Tibial artery (tissue), 4 donors: ENCODE measurements at regions of chr22 and their contacts with region 1.

Region 1: GRCh38 chr22:31661851-31662656 is at the start of gene PISD:
- DNase-seq: peak; percentile 96
- H3K4me3 ChIP-seq: peak within 1 kb of the TSS; percentile 95 to 96
- H3K27ac ChIP-seq: peak within 1 kb of the TSS; percentile 74 to 77
- H3K4me1 ChIP-seq: peaks cover 0 to 17% (median 16%) of the 10 kb centered on the region in 4 donors
- H3K27me3 ChIP-seq: no peaks in the 10 kb centered on the region
- CTCF ChIP-seq: no peak

Region 2: GRCh38 chr22:31561238-31561887 is 100.7 kb before region 1 on chr22:
- intact Hi-C with region 1: no loop called
- DNase-seq: peak; percentile 60 to 79
- H3K4me3 ChIP-seq: no peak overlapping the region
- H3K27ac ChIP-seq: peak overlapping the region; percentile 26
- H3K4me1 ChIP-seq: peaks cover 0 to 10% (median 5%) of the 10 kb centered on the region in 4 donors
- H3K27me3 ChIP-seq: no peaks in the 10 kb centered on the region
- CTCF ChIP-seq: peak; percentile 67 to 76

Region 3: GRCh38 chr22:31749636-31750364 is 87.7 kb after region 1 on chr22 and contains the start of gene PRR14L:
- intact Hi-C with region 1: loop called (anchors 5 kb)
- DNase-seq: peak; percentile 98 to 99
- H3K4me3 ChIP-seq: peak within 1 kb of the TSS; percentile 86 to 88
- H3K27ac ChIP-seq: peak within 1 kb of the TSS; percentile 86 to 88
- H3K4me1 ChIP-seq: peaks cover 0 to 54% (median 42%) of the 10 kb centered on the region in 4 donors
- H3K27me3 ChIP-seq: no peaks in the 10 kb centered on the region
- CTCF ChIP-seq: no peak